Right lobe of liver (tissue), 6 donors: ENCODE measurements at regions of chr12 and their contacts with region 1.

Region 1: GRCh38 chr12:5511644-5512600 is 80.0 kb downstream of the NTF3 start:
- DNase-seq: peak in 2 of 3 donors; percentile 59 to 62
- ATAC-seq: peak; percentile 63 to 81 (median 74)
- H3K4me3 ChIP-seq: no peak overlapping the region
- H3K27ac ChIP-seq: no peak overlapping the region
- H3K4me1 ChIP-seq: no peaks in the 10 kb centered on the region
- H3K27me3 ChIP-seq: no peaks in the 10 kb centered on the region
- CTCF ChIP-seq: peak in 3 of 4 donors; percentile 54 to 63 (median 60)
- POLR2A ChIP-seq: no peak

Region 2: GRCh38 chr12:5402009-5402935 is 109.7 kb before region 1 on chr12:
- intact Hi-C with region 1: no loop called
- DNase-seq: no peak
- ATAC-seq: no peak
- H3K4me3 ChIP-seq: no peak overlapping the region
- H3K27ac ChIP-seq: no peak overlapping the region
- H3K4me1 ChIP-seq: no peaks in the 10 kb centered on the region
- H3K27me3 ChIP-seq: no peaks in the 10 kb centered on the region
- CTCF ChIP-seq: no peak
- POLR2A ChIP-seq: no peak

Region 3: DNA sequence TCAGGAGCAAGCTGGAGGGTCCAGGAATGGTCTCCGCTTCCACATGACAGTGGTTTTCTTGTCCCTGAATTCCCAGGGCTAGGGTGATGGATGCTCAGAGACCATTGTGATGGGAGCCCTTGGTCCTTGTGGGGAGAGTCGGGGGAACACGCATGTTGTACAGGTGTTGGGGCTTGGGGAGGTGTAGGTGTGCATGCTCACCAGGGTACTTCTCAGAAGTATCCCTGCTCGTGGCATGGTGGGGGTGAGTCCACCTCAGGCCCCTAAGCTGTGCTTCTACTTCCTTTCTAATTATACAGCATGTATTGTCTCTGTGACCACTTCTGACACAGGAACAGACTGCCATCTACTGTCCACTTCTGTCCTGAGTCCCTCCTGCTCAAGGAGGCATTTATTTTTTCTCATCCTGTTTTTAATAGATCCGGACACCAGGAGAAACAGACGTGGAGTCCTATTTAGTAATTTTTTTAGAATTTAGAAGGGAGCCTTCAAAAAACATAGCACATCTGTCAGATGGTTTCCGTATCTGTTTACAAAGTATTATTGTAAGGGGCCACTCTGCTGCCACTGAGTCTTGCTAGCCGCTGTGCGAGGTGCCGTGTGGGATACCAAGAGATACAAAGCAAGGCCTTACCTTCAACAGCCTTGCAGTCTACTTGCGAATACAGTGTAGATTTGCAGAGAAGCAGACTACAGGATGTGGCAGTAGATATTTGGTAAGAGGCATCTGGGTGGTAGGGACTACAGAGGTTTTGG is 69.5 kb before region 1 on chr12:
- intact Hi-C with region 1: loop called in 1 of 2 experiments (anchors 10 kb)
- DNase-seq: no peak
- ATAC-seq: peak; percentile 83 to 90 (median 84)
- H3K4me3 ChIP-seq: no peak overlapping the region
- H3K27ac ChIP-seq: no peak overlapping the region
- H3K4me1 ChIP-seq: peaks cover 0 to 9% (median 4%) of the 10 kb centered on the region in 4 donors
- H3K27me3 ChIP-seq: no peaks in the 10 kb centered on the region
- CTCF ChIP-seq: peak; percentile 60 to 75 (median 68)
- POLR2A ChIP-seq: no peak